A549 (cell line): ENCODE measurements at regions of chr1 and their contacts with region 1.

Region 1: GRCh38 chr1:92858564-92859399 is 26.9 kb downstream of the RPL5 start:
- DNase-seq: peak; percentile 57 to 72
- ATAC-seq: peak; percentile 82 to 88
- H3K4me3 ChIP-seq: no peak overlapping the region
- H3K27ac ChIP-seq: peak overlapping the region in 1 of 2 experiments; percentile 37; a peak in 1 of 6 replicates
- H3K4me1 ChIP-seq: no peaks in the 10 kb centered on the region
- CTCF ChIP-seq: peak; percentile 99
- EP300 ChIP-seq: no peak
- POLR2A ChIP-seq: no peak
- RAD21 ChIP-seq: peak; percentile 95 to 96

Region 2: DNA sequence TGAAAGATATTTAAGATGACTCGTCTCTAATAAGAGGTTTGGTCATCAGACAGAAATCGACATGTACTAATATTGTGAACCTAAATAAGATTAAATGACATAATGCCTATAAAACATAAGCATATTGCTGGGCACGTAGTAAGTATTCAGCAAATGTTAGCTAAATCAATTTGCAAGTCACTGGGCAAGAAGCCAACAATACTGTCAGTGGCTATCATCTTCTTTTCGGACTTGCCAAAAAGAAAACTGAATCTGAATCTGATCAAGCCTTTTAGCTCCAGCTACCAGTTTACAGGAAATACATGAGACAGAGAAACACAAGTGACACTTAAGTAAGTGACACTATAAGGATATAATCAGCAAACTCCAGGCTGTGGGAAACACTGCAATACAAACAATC is 19.0 kb after region 1 on chr1:
- CTCF ChIA-PET with region 1: interaction called, 13 read pairs
- POLR2A ChIA-PET with region 1: no interaction called
- DNase-seq: no peak
- ATAC-seq: no peak
- H3K4me3 ChIP-seq: no peak overlapping the region
- H3K27ac ChIP-seq: no peak overlapping the region
- H3K4me1 ChIP-seq: 0 out of 3 replicates have a peak, but pooled peaks cover 5% of the 10 kb centered on the region
- CTCF ChIP-seq: no peak
- EP300 ChIP-seq: no peak
- POLR2A ChIP-seq: no peak
- RAD21 ChIP-seq: no peak

Region 3: DNA sequence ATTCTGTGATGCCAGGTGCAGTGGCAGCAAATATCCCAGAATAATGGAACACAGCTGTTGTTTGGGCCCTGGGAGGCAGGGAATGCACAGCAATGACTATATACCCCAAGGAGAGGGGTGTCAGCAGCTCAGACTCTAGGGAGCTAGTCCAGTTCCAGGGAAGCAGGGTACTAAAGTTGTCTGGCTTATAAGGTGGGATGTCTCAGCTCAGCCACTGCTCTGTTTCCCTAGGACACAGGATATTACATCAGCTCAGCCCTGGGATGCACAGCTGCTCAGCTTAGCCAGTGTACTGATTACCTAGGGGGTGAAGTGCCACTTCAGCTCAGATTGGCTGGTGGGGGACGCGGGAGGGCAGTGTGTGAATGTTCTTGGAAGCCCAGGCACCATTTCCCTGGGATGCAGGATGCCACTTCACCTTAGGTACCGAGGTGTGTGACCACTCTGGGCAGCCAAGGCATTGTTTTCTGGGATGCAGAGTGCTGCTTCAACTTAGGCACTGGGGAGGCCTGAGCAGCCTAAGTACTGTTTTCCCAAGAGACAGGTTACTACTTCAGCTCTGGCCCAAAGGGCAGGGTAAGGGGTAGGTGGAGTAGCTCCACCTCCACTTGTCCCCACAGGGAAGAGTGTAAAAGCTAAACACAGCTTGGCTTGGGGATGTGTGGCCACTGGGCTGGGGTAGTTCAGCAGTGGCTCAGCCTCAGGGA is 43.1 kb after region 1 on chr1:
- CTCF ChIA-PET with region 1: interaction called, 17 read pairs
- POLR2A ChIA-PET with region 1: no interaction called
- DNase-seq: no peak
- ATAC-seq: no peak
- H3K4me3 ChIP-seq: no peak overlapping the region
- H3K27ac ChIP-seq: no peak overlapping the region
- H3K4me1 ChIP-seq: no peaks in the 10 kb centered on the region
- CTCF ChIP-seq: no peak
- EP300 ChIP-seq: no peak
- POLR2A ChIP-seq: no peak
- RAD21 ChIP-seq: no peak

Region 4: GRCh38 chr1:92960395-92961130 is 101.8 kb after region 1 on chr1:
- CTCF ChIA-PET with region 1: interaction called, 130 read pairs
- POLR2A ChIA-PET with region 1: no interaction called
- DNase-seq: peak; percentile 74 to 80
- ATAC-seq: peak; percentile 76 to 85
- H3K4me3 ChIP-seq: peak overlapping the region; percentile 97
- H3K27ac ChIP-seq: peak overlapping the region; percentile 98 to 99
- H3K4me1 ChIP-seq: peaks cover 30% of the 10 kb centered on the region
- CTCF ChIP-seq: peak; percentile 57
- EP300 ChIP-seq: no peak
- POLR2A ChIP-seq: no peak
- RAD21 ChIP-seq: peak; percentile 75 to 80

Region 5: GRCh38 chr1:93007941-93008577 is 149.3 kb after region 1 on chr1:
- CTCF ChIA-PET with region 1: interaction called, 19 read pairs
- POLR2A ChIA-PET with region 1: no interaction called
- DNase-seq: no peak
- ATAC-seq: no peak
- H3K4me3 ChIP-seq: no peak overlapping the region
- H3K27ac ChIP-seq: no peak overlapping the region
- H3K4me1 ChIP-seq: no peaks in the 10 kb centered on the region
- CTCF ChIP-seq: no peak
- EP300 ChIP-seq: no peak
- POLR2A ChIP-seq: no peak
- RAD21 ChIP-seq: no peak